Aorta (tissue), 5 donors: ENCODE measurements at regions of chr16 and their contacts with region 1.

Region 1: GRCh38 chr16:15949210-15950160 is at the start of gene ABCC1:
- DNase-seq: peak; percentile 54 to 81
- ATAC-seq: peak; percentile 57
- H3K4me3 ChIP-seq: peak within 1 kb of the TSS; percentile 61 to 98
- H3K27ac ChIP-seq: peak within 1 kb of the TSS; percentile 56 to 73
- H3K4me1 ChIP-seq: peaks cover 0 to 6% of the 10 kb centered on the region in 2 donors
- H3K27me3 ChIP-seq: no peaks in the 10 kb centered on the region
- total RNA-seq, gene ABCC1: 56.5 to 61.9 TPM

Region 2: DNA sequence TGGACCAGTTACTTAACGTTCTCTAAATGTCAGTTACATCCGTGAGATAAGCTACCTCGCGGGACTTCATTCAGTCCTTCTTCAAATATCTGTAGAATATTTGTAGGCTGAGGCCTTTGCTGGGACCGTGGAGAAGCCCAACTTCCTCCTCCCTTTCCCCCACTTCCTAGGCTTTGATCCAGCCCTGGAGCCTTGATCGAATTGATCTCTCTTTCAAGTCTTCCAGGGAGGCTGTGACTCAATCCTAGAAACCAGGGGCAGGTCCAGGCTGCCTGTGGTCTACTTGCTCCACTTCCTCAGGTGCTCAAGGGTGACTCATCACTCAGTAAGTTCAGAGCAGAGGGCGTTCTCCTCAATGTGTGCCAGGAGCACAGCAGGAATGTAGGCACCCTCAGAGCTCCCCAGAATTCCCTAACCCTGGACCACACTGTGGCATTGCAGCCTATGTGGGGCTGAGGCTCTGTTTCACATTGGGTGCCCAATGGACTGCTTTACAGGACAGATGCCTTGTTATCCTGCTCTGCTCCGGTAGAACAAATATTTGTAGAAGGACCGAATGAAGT is 49.9 kb before region 1 on chr16:
- intact Hi-C with region 1: loop called in 1 of 2 experiments (anchors 10 kb)
- DNase-seq: no peak
- ATAC-seq: no peak
- H3K4me3 ChIP-seq: no peak overlapping the region
- H3K27ac ChIP-seq: no peak overlapping the region
- H3K4me1 ChIP-seq: no peaks in the 10 kb centered on the region
- H3K27me3 ChIP-seq: no peaks in the 10 kb centered on the region

Region 3: GRCh38 chr16:15976929-15977637 is 27.6 kb after region 1 on chr16:
- intact Hi-C with region 1: no loop called
- DNase-seq: peak; percentile 63 to 81
- ATAC-seq: peak; percentile 83
- H3K4me3 ChIP-seq: no peak overlapping the region
- H3K27ac ChIP-seq: peak overlapping the region; percentile 93 to 99
- H3K4me1 ChIP-seq: peaks cover 7 to 17% of the 10 kb centered on the region in 2 donors
- H3K27me3 ChIP-seq: no peaks in the 10 kb centered on the region

Region 4: DNA sequence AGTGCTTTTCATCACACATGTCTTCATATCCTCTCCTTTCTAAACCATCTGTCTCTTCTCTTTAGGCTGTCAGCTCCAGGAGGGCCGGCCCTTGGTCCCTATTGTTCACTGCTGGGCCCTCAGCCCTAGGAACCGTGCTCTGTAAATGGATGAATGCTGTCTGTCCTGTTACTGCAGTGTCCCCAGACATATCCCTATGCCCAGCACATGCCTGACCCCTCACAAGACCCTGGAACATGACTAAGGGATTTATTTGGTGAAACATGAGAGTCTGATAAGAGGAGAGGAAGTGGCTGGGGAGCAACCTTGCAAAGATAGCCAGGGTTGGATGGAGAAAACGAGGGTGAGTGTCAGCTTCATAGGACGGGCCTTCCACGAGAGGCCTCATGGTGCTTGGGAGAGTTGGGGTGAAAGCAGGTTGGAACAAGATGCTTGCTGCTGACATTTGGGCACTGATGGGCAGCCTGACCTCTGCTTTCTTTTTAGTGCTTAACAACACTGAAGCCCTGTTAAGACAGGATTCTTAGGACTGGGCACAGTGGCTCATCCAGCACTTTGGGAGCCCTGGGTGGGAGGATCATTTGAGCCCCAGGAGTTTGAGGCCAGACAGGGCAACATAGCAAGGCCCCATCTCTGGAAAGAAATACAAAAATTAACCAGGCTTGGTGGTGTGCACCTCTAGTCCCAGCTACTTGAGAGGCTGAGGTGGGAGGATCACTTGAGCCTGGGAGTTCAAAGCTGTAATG is 39.0 kb after region 1 on chr16:
- intact Hi-C with region 1: loop called in 1 of 2 experiments (anchors 5 kb)
- DNase-seq: no peak
- ATAC-seq: no peak
- H3K4me3 ChIP-seq: no peak overlapping the region
- H3K27ac ChIP-seq: peak overlapping the region; percentile 47 to 90
- H3K4me1 ChIP-seq: peaks cover 0 to 3% of the 10 kb centered on the region in 2 donors
- H3K27me3 ChIP-seq: no peaks in the 10 kb centered on the region

Region 5: GRCh38 chr16:16014329-16015144 is 65.1 kb after region 1 on chr16:
- intact Hi-C with region 1: loop called in 1 of 2 experiments (anchors 5 kb)
- DNase-seq: peak; percentile 92 to 94
- ATAC-seq: peak; percentile 90
- H3K4me3 ChIP-seq: no peak overlapping the region
- H3K27ac ChIP-seq: peak overlapping the region in 1 of 2 donors; percentile 43
- H3K4me1 ChIP-seq: no peaks in the 10 kb centered on the region
- H3K27me3 ChIP-seq: no peaks in the 10 kb centered on the region

Region 6: DNA sequence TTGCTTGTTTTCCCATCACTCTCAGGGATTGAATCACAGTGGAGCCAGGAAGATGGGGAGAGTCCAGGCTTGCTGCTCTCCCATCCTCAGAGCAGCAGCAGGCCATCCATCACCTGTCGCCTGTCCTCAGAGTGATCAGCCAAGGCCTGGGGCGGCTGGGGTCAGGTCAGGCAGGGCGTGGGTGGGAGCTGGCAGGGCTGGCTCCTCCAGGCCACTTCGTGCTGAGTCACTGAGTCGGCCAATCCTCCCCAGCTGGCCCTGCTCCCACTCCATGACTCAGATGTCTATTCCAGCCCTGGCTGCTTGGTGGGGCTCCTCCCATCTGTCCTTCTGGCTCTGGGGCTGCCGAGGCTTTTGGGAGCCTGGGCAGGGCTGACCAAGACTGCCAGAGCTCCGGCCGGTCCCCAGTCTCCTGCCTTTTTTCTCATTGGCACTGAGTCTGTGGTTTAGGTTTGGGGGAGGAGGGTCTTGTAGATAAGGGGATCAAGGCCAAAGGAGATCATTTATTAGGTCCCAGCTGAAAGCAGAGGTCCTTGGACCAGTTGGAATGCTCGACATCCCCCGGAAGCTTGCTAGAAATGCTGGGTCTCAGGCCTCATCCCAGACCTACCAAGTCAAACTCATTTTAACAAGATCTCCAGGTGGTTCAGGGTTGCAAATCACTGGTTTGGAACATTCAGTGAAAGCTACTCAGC is 72.7 kb after region 1 on chr16:
- intact Hi-C with region 1: loop called (anchors 5 kb)
- DNase-seq: peak; percentile 97 to 99
- ATAC-seq: peak; percentile 94
- H3K4me3 ChIP-seq: no peak overlapping the region
- H3K27ac ChIP-seq: peak overlapping the region; percentile 2 to 69
- H3K4me1 ChIP-seq: peaks cover 3 to 4% of the 10 kb centered on the region in 2 donors
- H3K27me3 ChIP-seq: no peaks in the 10 kb centered on the region

Region 7: DNA sequence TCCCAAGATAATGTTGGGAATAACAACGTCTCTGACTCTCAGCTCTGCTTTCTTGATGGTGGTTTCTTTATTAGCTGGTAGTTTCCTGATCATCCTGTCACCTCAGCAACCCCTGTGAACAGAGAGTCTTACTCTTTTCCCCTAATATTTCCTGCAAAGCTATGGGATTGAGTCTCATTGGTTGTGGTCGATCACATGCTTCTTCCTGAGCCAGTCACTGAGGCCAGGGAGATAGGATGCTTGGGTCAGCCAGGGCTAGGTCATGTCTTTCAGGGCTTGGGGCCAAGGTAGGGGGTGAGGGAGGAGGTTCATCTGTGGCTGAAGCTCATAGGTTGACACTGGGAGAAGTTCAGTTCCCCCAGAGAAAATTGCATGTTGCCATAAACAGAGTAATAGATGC is 114.2 kb after region 1 on chr16:
- intact Hi-C with region 1: no loop called
- DNase-seq: no peak
- ATAC-seq: no peak
- H3K4me3 ChIP-seq: no peak overlapping the region
- H3K27ac ChIP-seq: no peak overlapping the region
- H3K4me1 ChIP-seq: peaks cover 0 to 2% of the 10 kb centered on the region in 2 donors
- H3K27me3 ChIP-seq: no peaks in the 10 kb centered on the region

Region 8: DNA sequence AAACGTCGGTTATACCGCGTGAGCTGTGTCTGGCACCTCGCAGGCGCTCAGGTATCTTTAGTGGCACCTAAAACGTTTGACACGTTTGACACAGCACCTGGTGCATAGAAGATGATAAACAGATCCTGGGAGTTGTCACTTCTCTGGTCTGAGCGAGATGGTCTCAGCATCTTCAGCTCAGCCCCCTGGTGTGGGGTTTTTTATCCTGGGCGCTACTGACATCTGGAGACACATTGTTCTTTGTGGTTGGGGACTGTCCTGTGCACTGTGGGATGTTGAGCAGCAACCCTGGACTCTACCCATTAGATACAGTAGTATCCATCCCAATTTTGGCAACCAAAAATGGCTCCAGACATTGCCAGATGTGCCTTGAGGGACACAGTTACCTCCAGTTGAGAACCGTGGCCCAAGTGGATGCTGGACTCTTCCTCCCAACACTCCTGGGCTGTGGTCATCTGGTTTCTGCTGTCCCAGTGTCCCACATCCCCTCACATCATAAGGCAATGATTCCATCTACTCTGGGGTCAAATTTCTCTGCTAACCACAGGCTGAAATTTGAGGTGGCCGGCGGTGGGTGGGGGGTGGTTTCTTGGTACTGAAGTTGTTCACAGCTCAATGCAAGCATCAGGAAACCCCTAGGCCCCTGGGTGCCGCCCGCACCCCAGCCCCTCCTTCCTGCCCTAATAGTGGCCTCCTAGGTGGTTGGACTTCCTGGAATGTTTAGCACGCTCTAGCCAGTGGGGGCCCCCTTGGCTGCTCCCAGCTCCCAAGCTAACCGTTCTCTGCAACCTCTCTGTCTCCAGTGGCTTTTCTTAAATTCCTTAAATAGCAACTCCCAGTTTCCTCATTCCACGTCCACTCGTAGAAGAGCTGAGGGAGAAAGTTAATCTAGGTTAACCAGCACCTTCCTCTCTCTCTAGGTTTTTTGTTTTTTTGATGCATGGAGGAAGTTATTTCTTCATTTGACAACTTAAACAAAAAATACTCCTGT is 124.7 kb after region 1 on chr16:
- intact Hi-C with region 1: loop called in 1 of 2 experiments (anchors 5 kb)
- DNase-seq: no peak
- ATAC-seq: no peak
- H3K4me3 ChIP-seq: no peak overlapping the region
- H3K27ac ChIP-seq: peak overlapping the region in 1 of 2 donors; percentile 91
- H3K4me1 ChIP-seq: peaks cover 3 to 11% of the 10 kb centered on the region in 2 donors
- H3K27me3 ChIP-seq: no peaks in the 10 kb centered on the region